HEK293 (cell line): ENCODE measurements at regions of chr6 and their contacts with region 1.

Region 1: DNA sequence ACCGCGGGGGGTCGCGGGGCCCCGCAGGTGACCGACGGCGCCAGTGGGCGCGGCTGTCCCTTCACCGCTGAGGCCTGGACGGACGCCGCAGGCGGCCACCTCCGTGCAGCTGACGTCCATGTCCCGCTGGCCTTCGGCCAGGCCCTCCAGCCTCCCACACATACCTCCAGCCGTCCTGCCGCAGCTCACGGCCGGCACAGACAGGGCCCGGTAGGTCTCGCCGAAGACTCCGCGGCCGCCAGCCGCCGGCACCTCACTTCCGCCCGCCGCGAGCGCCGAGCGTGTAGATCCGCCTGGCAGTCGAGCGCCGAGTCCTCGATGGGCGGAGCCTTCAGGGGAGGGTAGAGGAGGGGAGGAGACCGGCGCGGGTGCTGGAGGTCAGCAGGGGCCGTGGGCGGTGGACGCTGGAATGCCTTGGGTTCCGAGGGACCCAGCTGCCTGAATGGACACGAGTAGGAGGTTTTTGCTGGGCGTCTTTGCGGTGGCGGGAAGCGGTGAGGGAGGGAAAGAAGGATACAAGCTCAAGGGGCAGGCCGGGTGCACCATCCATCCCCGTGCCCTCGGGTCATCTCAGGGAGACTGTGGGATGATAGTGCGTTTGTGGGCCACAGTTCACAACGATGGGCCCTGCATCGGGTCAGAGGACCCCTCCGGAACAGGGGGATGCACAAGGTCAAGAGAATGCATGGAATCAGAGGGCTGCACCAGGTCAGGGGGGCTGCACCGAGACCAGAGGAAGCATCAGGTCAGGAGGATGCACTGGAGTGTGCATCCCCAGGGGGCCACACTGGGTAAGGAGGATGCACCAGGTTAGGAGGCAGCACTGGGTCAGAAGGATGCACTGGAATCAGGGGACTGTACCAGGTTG is at the start of gene EXOC2:
- H3K4me3 ChIP-seq: peak within 1 kb of the TSS; percentile 67
- H3K27ac ChIP-seq: peak within 1 kb of the TSS; percentile 92
- H3K4me1 ChIP-seq: peaks cover 11% of the 10 kb centered on the region
- CTCF ChIP-seq: no peak

Region 2: GRCh38 chr6:650098-650497 is 43.0 kb before region 1 on chr6:
- CTCF ChIA-PET with region 1: interaction called, 4 read pairs
- POLR2A ChIA-PET with region 1: interaction called, 11 read pairs
- H3K4me3 ChIP-seq: no peak overlapping the region
- H3K27ac ChIP-seq: no peak overlapping the region
- H3K4me1 ChIP-seq: peaks cover 22% of the 10 kb centered on the region
- CTCF ChIP-seq: no peak

Region 3: GRCh38 chr6:710601-711571 is 17.8 kb after region 1 on chr6:
- CTCF ChIA-PET with region 1: no interaction called
- POLR2A ChIA-PET with region 1: no interaction called
- H3K4me3 ChIP-seq: peak overlapping the region; percentile 19
- H3K27ac ChIP-seq: peak overlapping the region; percentile 47; the same call in 1 of the 2 replicates
- H3K4me1 ChIP-seq: peaks cover 10% of the 10 kb centered on the region
- CTCF ChIP-seq: no peak

Region 4: DNA sequence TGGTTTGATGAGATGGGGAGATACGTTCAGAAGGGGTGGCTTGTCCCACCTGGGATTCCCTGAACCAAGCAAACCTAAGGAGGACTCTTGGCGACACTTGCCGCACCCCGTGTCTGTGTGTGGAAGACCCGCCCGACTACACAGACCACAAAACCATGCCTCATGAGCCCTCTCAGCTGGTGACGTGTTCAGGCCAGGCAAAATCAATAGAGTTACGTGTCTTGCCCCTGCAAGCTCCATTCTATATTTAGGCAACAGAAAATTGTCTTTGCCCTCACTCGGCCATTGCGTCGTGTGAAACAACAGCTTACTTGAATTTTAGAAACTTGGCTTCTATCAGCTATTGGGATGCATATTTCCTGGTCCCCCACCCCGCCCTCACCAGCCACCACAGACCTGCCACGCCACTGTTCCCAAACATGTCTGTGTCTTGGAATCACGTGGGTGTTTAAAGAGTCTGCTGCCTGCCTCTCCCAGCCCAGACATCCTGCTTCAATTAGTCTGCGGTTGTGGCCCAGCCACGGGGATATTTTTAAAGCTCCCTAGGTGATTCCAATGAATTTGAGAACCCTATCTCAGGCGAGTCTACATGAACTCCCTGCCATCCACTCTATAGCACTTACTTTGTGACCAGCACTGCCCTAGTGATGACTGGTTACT is 279.0 kb after region 1 on chr6:
- CTCF ChIA-PET with region 1: no interaction called
- POLR2A ChIA-PET with region 1: no interaction called
- H3K4me3 ChIP-seq: no peak overlapping the region
- H3K27ac ChIP-seq: no peak overlapping the region
- H3K4me1 ChIP-seq: no peaks in the 10 kb centered on the region
- CTCF ChIP-seq: no peak

Region 5: GRCh38 chr6:1297746-1298145 is 604.7 kb after region 1 on chr6:
- CTCF ChIA-PET with region 1: no interaction called
- POLR2A ChIA-PET with region 1: no interaction called
- H3K4me3 ChIP-seq: no peak overlapping the region
- H3K27ac ChIP-seq: no peak overlapping the region
- H3K4me1 ChIP-seq: peaks cover 20% of the 10 kb centered on the region
- CTCF ChIP-seq: no peak